ENCODE measurements at regions of chr5 and their contacts with region 1.

Region 1: DNA sequence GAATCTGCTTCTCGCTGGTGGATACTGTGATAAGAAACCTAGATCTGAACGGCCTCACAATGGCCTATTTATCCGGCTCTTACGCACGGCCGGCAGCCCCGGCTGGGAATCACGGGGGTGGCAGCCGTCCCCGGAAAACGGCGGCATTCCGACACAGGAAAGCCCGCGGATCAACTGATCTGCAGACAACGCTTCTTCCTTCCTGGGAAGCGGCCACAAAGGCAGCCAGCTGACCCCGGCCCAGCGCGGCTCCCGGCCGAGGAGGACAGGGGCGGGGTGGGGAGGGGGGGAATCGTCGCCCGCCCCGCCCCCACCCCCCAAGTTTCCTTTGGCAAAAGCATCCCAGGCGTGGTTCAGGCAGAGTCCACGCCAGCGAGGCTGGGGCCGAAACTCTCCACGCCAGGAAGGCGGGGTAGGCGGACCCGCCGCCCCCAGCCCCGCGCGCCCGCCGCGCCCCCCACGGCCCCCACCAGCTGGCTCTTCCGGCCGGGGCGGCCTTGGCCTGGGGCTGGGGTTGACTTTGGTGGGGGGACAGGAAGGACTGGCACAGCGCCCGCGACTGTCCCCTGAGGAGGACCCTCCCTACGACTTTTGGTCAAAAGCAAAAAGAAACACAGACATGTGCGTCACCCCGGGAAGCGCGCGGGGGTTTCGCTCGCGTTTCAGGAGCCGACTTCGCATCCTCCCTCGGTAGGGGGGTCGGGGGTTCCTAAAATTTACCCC is 247.7 kb upstream of the ANKRD55 start:
- DNase-seq: peak in 23 of 35 experiments; percentile 8 to 56 (median 28)
- ATAC-seq: peak; percentile 7 to 19 (median 10)
- H3K4me3 ChIP-seq: peak overlapping the region; percentile 53 to 65
- H3K4me3 Mint-ChIP-seq: peak overlapping the region; percentile 82 to 93 (median 86)
- H3K27ac ChIP-seq: peak overlapping the region; percentile 82
- H3K27ac Mint-ChIP-seq: peak overlapping the region; percentile 96 to 97
- H3K4me1 ChIP-seq: peaks cover 28 to 50% of the 10 kb centered on the region in 2 experiments
- H3K4me1 Mint-ChIP-seq: peaks cover 33 to 61% (median 54%) of the 10 kb centered on the region in 3 donors
- H3K27me3 ChIP-seq: peaks cover 0 to 16% of the 10 kb centered on the region in 2 experiments
- H3K27me3 Mint-ChIP-seq: no peaks in the 10 kb centered on the region

Region 2: DNA sequence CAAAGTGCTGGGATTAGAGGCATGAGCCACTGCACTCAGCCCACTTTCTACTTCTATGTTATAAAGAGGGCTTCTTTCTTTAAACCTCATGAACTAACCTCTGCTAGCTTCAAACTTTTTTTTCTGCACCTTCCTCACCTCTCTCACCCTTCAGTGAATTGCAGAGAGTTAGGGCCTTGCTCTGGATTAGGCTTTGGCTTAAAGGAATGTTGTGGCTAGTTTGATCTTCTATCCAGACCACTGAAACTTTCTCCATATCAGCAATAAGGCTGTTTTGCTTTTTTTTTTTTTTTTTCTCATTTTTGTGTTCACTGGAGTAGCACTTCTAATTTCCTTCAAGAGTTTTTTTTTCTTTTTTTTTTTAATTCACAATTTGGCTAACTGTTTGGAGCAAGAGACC is 118.1 kb after region 1 on chr5:
- CTCF ChIA-PET with region 1: no interaction called
- POLR2A ChIA-PET with region 1: interaction called in 1 of 2 experiments, 16 read pairs
- DNase-seq: no peak
- ATAC-seq: no peak
- H3K4me3 ChIP-seq: no peak overlapping the region
- H3K4me3 Mint-ChIP-seq: no peak overlapping the region
- H3K27ac ChIP-seq: no peak overlapping the region
- H3K27ac Mint-ChIP-seq: peak overlapping the region in 1 of 2 donors; percentile 37
- H3K4me1 ChIP-seq: peaks cover 0 to 2% of the 10 kb centered on the region in 2 experiments
- H3K4me1 Mint-ChIP-seq: peaks cover 39 to 63% (median 47%) of the 10 kb centered on the region in 3 donors
- H3K27me3 ChIP-seq: no peaks in the 10 kb centered on the region
- H3K27me3 Mint-ChIP-seq: no peaks in the 10 kb centered on the region